CD8-positive, alpha-beta T cell (primary cell): ENCODE measurements at regions of chr14 and their contacts with region 1.

Region 1: GRCh38 chr14:89720741-89721315 is 233.7 kb downstream of the EFCAB11 start:
- DNase-seq: peak; percentile 63 to 96 (median 77)
- ATAC-seq: peak; percentile 89
- H3K4me3 ChIP-seq: peak overlapping the region; percentile 17 to 29
- H3K4me3 Mint-ChIP-seq: peak overlapping the region; percentile 64
- H3K27ac ChIP-seq: peak overlapping the region; percentile 70 to 89
- H3K27ac Mint-ChIP-seq: peak overlapping the region; percentile 97
- H3K4me1 ChIP-seq: peaks cover 86% of the 10 kb centered on the region
- H3K4me1 Mint-ChIP-seq: peaks cover 85% of the 10 kb centered on the region
- H3K27me3 ChIP-seq: no peaks in the 10 kb centered on the region
- H3K27me3 Mint-ChIP-seq: no peaks in the 10 kb centered on the region
- CTCF ChIP-seq: no peak

Region 2: GRCh38 chr14:89365061-89365801 is 355.6 kb before region 1 on chr14:
- CTCF ChIA-PET with region 1: no interaction called
- POLR2A ChIA-PET with region 1: no interaction called
- intact Hi-C with region 1: loop called in 1 of 2 experiments (anchors 1 kb)
- DNase-seq: peak in 8 of 9 experiments; percentile 33 to 88 (median 62)
- ATAC-seq: peak; percentile 92
- H3K4me3 ChIP-seq: peak overlapping the region; percentile 34 to 36
- H3K4me3 Mint-ChIP-seq: peak overlapping the region; percentile 64
- H3K27ac ChIP-seq: peak overlapping the region; percentile 60 to 73
- H3K27ac Mint-ChIP-seq: peak overlapping the region; percentile 85
- H3K4me1 ChIP-seq: peaks cover 35% of the 10 kb centered on the region
- H3K4me1 Mint-ChIP-seq: peaks cover 56% of the 10 kb centered on the region
- H3K27me3 ChIP-seq: no peaks in the 10 kb centered on the region
- H3K27me3 Mint-ChIP-seq: no peaks in the 10 kb centered on the region
- CTCF ChIP-seq: no peak

Region 3: DNA sequence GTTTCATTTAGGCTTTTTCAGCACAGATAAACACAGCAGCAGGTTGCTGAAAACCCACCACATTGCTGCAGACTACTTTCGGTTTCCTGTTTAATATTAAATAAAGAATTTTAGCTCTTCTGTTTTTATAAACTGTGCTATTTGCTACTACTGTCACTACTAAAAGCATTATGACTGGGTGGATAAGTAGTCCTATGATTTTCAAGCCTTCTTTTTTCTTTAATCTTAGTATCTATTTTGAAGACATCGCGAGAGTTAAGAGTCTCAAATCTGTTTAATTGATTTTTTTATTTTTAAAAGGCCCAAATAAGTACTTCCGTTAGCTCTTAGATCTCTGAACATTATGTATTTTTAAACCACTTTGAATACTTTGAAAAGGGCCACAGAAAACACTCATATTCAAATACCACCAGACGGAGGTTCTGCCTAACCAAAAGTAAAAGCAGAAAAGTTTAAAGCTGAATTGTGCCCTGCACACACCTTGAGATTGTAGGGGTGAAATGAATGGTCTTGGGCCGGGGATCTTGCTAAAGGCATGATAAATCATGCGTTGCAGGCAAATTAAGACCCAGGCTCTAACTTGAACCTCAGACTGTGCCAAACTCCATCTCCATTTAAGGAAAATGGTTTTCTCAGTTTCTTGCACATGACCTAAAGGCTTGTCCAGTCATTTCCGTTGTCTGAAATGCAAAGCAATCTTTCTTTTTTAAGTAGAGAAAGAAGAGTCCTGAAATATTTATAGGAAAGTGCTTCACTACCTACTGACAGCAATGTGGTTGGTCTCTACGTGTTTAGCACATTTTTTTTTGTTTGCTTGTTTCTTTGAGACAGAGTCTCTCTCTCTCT is 290.2 kb before region 1 on chr14:
- CTCF ChIA-PET with region 1: interaction called, 9 read pairs
- POLR2A ChIA-PET with region 1: interaction called, 3 read pairs
- intact Hi-C with region 1: loop called in 1 of 2 experiments (anchors 5 kb)
- DNase-seq: peak in 5 of 9 experiments; percentile 26 to 82 (median 35)
- ATAC-seq: peak; percentile 83
- H3K4me3 ChIP-seq: peak overlapping the region; percentile 43 to 53
- H3K4me3 Mint-ChIP-seq: peak overlapping the region; percentile 73
- H3K27ac ChIP-seq: peak overlapping the region; percentile 48 to 78
- H3K27ac Mint-ChIP-seq: peak overlapping the region; percentile 93
- H3K4me1 ChIP-seq: peaks cover 35% of the 10 kb centered on the region
- H3K4me1 Mint-ChIP-seq: peaks cover 65% of the 10 kb centered on the region
- H3K27me3 ChIP-seq: no peaks in the 10 kb centered on the region
- H3K27me3 Mint-ChIP-seq: no peaks in the 10 kb centered on the region
- CTCF ChIP-seq: no peak

Region 4: DNA sequence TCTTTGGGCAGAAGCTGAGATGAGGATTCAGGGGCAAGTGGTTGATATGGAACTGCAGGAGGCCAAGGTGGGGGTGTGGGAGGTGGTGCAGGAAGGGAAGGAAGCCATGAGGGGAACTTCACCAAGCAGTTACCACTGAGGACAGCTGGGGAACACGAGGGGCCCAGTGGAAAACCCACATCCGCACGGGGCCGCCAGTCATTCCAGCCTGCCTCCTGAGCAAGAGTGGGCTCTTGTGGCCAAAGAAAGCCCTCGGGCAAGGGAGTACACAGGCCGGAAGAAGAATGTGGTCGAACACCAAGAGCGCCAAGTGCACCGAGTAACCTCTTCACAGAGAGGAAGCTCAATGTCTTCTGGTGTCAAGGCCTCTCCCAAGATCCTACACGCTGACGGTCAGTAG is 51.6 kb before region 1 on chr14:
- CTCF ChIA-PET with region 1: no interaction called
- POLR2A ChIA-PET with region 1: no interaction called
- intact Hi-C with region 1: no loop called
- DNase-seq: peak in 7 of 9 experiments; percentile 10 to 51 (median 25)
- ATAC-seq: peak; percentile 20
- H3K4me3 ChIP-seq: no peak overlapping the region
- H3K4me3 Mint-ChIP-seq: no peak overlapping the region
- H3K27ac ChIP-seq: no peak overlapping the region
- H3K27ac Mint-ChIP-seq: no peak overlapping the region
- H3K4me1 ChIP-seq: peaks cover 21% of the 10 kb centered on the region
- H3K4me1 Mint-ChIP-seq: peaks cover 36% of the 10 kb centered on the region
- H3K27me3 ChIP-seq: no peaks in the 10 kb centered on the region
- H3K27me3 Mint-ChIP-seq: no peaks in the 10 kb centered on the region
- CTCF ChIP-seq: no peak

Region 5: GRCh38 chr14:89701211-89702043 is 19.4 kb before region 1 on chr14:
- CTCF ChIA-PET with region 1: interaction called, 7 read pairs
- POLR2A ChIA-PET with region 1: interaction called, 23 read pairs
- intact Hi-C with region 1: loop called (anchors 1 kb)
- DNase-seq: peak; percentile 66 to 90 (median 82)
- ATAC-seq: peak; percentile 84
- H3K4me3 ChIP-seq: peak overlapping the region; percentile 56 to 69
- H3K4me3 Mint-ChIP-seq: peak overlapping the region; percentile 86
- H3K27ac ChIP-seq: peak overlapping the region; percentile 57 to 62
- H3K27ac Mint-ChIP-seq: peak overlapping the region; percentile 88
- H3K4me1 ChIP-seq: peaks cover 27% of the 10 kb centered on the region
- H3K4me1 Mint-ChIP-seq: peaks cover 53% of the 10 kb centered on the region
- H3K27me3 ChIP-seq: no peaks in the 10 kb centered on the region
- H3K27me3 Mint-ChIP-seq: no peaks in the 10 kb centered on the region
- CTCF ChIP-seq: no peak

Region 6: DNA sequence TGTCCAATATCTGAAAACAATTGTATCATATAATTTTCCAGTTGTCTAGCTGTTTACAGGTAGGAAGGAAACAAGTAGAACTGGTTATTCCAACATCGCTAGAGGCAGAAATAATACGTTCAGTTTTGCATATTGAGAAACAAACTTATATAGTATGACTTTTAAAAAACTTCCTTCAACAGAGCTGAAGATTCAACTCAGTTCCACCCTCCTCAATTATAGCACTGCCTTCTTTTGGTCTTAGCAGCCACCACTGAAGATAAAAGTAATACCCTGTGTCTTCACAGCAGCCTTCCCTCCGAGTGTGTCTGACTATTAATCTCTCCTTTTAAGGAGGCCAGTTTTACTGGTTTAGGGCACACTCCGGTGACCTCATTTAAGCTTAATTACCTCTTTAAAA is 19.5 kb after region 1 on chr14:
- CTCF ChIA-PET with region 1: interaction called, 6 read pairs
- POLR2A ChIA-PET with region 1: interaction called, 5 read pairs
- intact Hi-C with region 1: loop called in 1 of 2 experiments (anchors 2 kb)
- DNase-seq: no peak
- ATAC-seq: no peak
- H3K4me3 ChIP-seq: no peak overlapping the region
- H3K4me3 Mint-ChIP-seq: no peak overlapping the region
- H3K27ac ChIP-seq: no peak overlapping the region
- H3K27ac Mint-ChIP-seq: no peak overlapping the region
- H3K4me1 ChIP-seq: no peaks in the 10 kb centered on the region
- H3K4me1 Mint-ChIP-seq: peaks cover 20% of the 10 kb centered on the region
- H3K27me3 ChIP-seq: no peaks in the 10 kb centered on the region
- H3K27me3 Mint-ChIP-seq: no peaks in the 10 kb centered on the region
- CTCF ChIP-seq: no peak

Region 7: GRCh38 chr14:89907655-89908054 is 186.8 kb after region 1 on chr14:
- CTCF ChIA-PET with region 1: no interaction called
- POLR2A ChIA-PET with region 1: no interaction called
- intact Hi-C with region 1: no loop called
- DNase-seq: no peak
- ATAC-seq: no peak
- H3K4me3 ChIP-seq: no peak overlapping the region
- H3K4me3 Mint-ChIP-seq: no peak overlapping the region
- H3K27ac ChIP-seq: no peak overlapping the region
- H3K27ac Mint-ChIP-seq: no peak overlapping the region
- H3K4me1 ChIP-seq: no peaks in the 10 kb centered on the region
- H3K4me1 Mint-ChIP-seq: peaks cover 14% of the 10 kb centered on the region
- H3K27me3 ChIP-seq: no peaks in the 10 kb centered on the region
- H3K27me3 Mint-ChIP-seq: no peaks in the 10 kb centered on the region
- CTCF ChIP-seq: no peak

Region 8: DNA sequence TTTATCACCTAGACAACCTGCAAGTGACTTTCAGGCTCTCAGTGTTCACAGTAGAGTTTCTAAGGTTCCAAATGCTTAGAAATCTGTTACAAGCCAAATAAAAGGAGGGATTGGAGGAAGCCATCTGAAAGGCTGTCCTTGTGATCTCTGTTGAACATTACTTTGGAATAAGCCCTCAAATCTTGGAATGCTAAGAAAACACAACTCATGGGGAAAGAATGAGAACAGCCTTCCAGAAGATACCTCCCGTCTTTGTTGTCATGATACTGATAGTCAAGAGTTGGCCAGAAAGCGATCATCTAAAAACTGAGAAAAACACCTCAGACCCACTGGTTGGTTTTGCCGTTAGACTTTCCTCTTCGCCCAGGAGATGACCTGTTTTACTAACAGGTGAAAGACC is 296.5 kb after region 1 on chr14:
- CTCF ChIA-PET with region 1: no interaction called
- POLR2A ChIA-PET with region 1: no interaction called
- intact Hi-C with region 1: no loop called
- DNase-seq: no peak
- ATAC-seq: no peak
- H3K4me3 ChIP-seq: no peak overlapping the region
- H3K4me3 Mint-ChIP-seq: no peak overlapping the region
- H3K27ac ChIP-seq: no peak overlapping the region
- H3K27ac Mint-ChIP-seq: no peak overlapping the region
- H3K4me1 ChIP-seq: no peaks in the 10 kb centered on the region
- H3K4me1 Mint-ChIP-seq: peaks cover 2% of the 10 kb centered on the region
- H3K27me3 ChIP-seq: no peaks in the 10 kb centered on the region
- H3K27me3 Mint-ChIP-seq: no peaks in the 10 kb centered on the region
- CTCF ChIP-seq: no peak